Naive thymus-derived CD8-positive, alpha-beta T cell (primary cell): ENCODE measurements at regions of chr3 and their contacts with region 1.

Region 1: DNA sequence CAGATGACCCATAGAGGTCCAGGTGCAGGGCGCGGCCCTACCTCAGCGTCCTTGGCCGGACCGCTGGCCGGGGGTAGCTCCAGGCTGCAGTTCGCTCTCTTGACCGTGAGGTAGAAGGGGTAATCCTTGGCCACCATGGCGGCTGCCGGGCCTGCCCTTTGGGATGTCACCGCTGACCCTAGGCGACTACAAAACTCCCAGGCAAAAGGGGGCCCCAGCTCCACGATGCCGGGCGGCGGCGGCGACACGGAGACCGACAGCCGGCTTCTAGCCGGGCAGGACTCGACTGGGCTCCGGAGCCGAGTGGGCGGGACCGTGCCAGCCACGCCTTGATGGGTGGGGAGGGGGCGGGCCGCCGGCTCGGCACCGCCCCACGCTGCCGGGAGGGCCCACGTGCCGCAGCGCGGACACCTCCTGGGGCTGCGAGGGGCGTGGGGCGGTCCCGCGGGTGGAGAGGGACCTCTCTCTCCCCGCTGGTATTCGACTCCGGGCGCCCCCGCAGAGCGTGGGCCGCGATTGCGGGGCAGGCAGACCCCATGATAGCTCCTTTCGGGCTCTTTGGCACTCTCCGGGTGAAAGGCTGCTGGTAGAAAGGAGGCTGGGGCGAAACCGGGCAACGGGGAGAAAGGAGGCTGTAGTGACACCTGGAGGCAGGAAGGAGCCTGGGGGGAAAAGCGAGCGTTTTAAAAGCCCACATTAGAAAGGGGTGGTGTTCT is at the start of gene ARHGEF3:
- DNase-seq: peak; percentile 81 to 95 (median 90)
- ATAC-seq: peak; percentile 76 to 83
- H3K4me3 Mint-ChIP-seq: peak within 1 kb of the TSS; percentile 91 to 100 (median 96)
- H3K27ac Mint-ChIP-seq: peak within 1 kb of the TSS; percentile 79 to 96 (median 92)
- H3K4me1 Mint-ChIP-seq: peaks cover 17 to 50% (median 32%) of the 10 kb centered on the region in 4 donors
- H3K27me3 Mint-ChIP-seq: no peaks in the 10 kb centered on the region
- polyA plus RNA-seq, gene ARHGEF3: 95.3 to 101 (median 96.9) TPM

Region 2: DNA sequence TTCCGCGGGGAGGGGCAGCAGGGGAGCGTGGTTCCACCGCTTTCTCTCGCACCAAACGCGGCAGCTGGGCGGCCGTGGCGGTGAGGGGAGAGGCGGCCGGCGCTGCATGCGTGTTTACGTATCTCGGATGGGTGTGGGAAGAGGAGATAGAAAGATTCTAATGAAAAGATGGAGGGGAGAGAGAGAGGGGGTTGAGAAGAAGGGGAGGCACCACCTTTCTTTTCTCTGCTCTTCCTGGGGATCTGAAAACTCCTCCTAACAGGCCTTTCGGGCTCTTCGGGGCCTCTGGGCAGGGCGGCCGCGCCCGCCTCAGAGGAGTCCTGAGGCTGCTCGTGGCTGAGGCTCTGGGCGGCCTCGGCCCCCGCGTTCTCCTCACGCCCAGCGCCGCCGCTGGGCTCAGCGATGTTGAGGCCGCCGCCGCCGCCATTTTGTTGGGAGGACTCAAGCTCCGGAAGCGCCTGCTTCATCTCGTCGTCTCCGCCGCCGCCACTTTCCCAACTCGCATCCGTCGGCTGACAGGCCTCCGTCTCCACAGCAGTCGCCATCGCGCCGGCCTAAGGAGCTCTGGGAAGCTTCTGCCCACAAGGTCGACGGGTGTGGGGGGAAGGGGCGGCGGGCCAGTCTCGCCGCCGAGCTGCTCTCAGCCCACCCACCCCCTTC is 119.2 kb before region 1 on chr3:
- POLR2A ChIA-PET with region 1: interaction called, 37 read pairs
- DNase-seq: peak; percentile 64 to 89 (median 73)
- ATAC-seq: peak; percentile 75 to 76
- H3K4me3 Mint-ChIP-seq: peak overlapping the region; percentile 87 to 98 (median 94)
- H3K27ac Mint-ChIP-seq: peak overlapping the region; percentile 87 to 99 (median 97)
- H3K4me1 Mint-ChIP-seq: peaks cover 12 to 46% (median 32%) of the 10 kb centered on the region in 4 donors
- H3K27me3 Mint-ChIP-seq: no peaks in the 10 kb centered on the region

Region 3: DNA sequence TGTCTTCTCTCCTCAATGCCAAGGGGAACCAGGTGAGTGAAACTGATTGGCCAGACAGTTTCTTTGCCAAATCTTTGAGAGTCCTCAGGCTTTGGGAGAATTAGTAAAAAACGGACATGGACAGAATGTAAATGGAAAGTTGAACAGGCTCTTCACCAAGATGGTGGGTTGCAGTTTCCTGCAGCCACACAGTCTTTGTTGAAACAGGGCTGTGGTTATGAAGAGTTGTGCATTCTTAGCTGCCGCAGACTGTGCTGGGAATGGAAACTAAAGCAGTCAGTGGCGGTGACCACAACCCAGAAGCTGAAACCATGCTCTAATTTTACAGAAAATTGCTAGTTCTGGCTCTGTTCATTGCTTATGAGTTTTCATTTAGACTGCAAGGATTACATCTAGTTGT is 76.6 kb before region 1 on chr3:
- POLR2A ChIA-PET with region 1: interaction called, 32 read pairs
- DNase-seq: peak; percentile 10 to 77 (median 60)
- ATAC-seq: peak; percentile 92 to 97
- H3K4me3 Mint-ChIP-seq: peak overlapping the region; percentile 65 to 83 (median 74)
- H3K27ac Mint-ChIP-seq: peak overlapping the region; percentile 81 to 98 (median 94)
- H3K4me1 Mint-ChIP-seq: peaks cover 23 to 73% (median 62%) of the 10 kb centered on the region in 4 donors
- H3K27me3 Mint-ChIP-seq: no peaks in the 10 kb centered on the region

Region 4: GRCh38 chr3:56758539-56758981 is 43.3 kb before region 1 on chr3:
- POLR2A ChIA-PET with region 1: interaction called, 145 read pairs
- DNase-seq: peak in 2 of 10 donors; percentile 11 to 35
- ATAC-seq: peak in 1 of 2 donors; percentile 63
- H3K4me3 Mint-ChIP-seq: peak overlapping the region; percentile 33 to 84 (median 66)
- H3K27ac Mint-ChIP-seq: peak overlapping the region; percentile 58 to 98 (median 90)
- H3K4me1 Mint-ChIP-seq: peaks cover 49 to 93% (median 85%) of the 10 kb centered on the region in 4 donors
- H3K27me3 Mint-ChIP-seq: no peaks in the 10 kb centered on the region

Region 5: GRCh38 chr3:56812754-56813650 is 11.2 kb after region 1 on chr3:
- POLR2A ChIA-PET with region 1: interaction called, 34 read pairs
- DNase-seq: no peak
- ATAC-seq: no peak
- H3K4me3 Mint-ChIP-seq: peak overlapping the region in 9 of 10 donors; percentile 24 to 73 (median 55)
- H3K27ac Mint-ChIP-seq: peak overlapping the region; percentile 38 to 95 (median 84)
- H3K4me1 Mint-ChIP-seq: peaks cover 27 to 72% (median 67%) of the 10 kb centered on the region in 4 donors
- H3K27me3 Mint-ChIP-seq: no peaks in the 10 kb centered on the region

Region 6: DNA sequence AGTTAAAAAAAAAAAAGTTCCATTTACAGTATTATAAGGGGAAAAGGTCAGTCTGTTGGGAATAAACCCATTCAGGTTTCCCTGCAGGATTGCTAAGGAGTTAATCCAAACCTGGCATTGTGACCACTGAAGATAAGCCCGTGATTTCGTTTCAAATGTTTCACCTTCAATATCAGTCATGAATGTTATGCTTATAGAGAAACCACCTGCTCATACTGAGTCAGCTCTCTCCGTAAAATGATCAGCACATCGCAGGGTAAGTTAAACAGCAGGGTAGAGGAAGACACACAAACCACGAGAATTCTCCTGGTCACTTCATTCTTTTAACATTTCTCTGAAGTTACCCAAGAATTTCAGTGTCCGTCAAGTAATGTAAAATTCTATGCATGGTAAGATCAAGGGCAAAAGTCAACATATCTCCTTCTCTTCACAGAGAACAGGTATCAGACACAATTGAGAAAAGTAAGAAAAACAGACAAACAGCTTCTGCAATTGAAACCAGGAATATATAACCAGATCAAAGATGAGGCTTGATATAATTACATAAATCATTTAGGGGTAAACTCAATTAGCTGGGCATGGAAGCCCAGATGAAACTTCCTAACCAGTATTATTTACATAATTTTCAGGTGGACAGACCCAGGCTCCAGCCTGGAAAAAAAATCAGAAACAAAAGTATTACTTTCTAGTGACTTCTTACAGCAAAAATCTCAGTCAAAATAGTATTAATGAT is 67.5 kb after region 1 on chr3:
- POLR2A ChIA-PET with region 1: no interaction called
- DNase-seq: no peak
- ATAC-seq: no peak
- H3K4me3 Mint-ChIP-seq: peak overlapping the region in 7 of 10 donors; percentile 33 to 72 (median 48)
- H3K27ac Mint-ChIP-seq: peak overlapping the region in 9 of 10 donors; percentile 10 to 75 (median 44)
- H3K4me1 Mint-ChIP-seq: peaks cover 22 to 55% (median 45%) of the 10 kb centered on the region in 4 donors
- H3K27me3 Mint-ChIP-seq: no peaks in the 10 kb centered on the region

Region 7: DNA sequence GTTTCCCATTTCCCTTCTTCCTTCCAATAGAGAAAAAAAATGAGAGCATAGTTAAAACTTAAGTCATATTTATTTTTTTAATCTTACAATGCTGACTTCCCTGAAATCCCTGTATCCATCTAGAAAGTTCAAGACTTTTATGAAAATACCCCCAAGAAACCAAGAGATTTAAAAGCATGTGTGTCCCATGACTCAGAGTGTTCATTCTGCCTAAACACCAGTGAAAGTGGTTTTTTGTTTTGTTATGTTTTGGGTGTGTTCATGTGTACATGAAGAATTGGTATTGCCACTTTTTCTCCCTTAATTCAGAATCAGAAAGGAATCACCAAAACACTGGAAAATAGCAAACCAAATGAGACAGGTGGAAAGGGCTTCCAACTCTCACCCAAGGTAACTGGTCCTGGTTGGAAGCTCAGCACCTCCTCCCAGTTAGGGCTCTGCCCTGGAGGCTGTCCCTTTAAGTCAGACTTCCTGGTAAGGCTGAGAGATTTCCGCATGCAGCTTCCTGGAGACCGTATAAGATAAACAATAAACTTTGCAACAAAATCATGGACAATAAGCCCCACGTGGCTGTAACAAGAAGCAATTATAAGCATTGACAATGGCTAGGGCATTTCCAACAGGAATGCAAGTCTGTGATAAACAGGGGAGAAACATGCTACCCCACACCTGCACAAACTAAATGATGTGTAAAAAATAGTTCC is 121.9 kb after region 1 on chr3:
- POLR2A ChIA-PET with region 1: interaction called, 69 read pairs
- DNase-seq: peak; percentile 16 to 83 (median 59)
- ATAC-seq: peak; percentile 77 to 89
- H3K4me3 Mint-ChIP-seq: peak overlapping the region; percentile 53 to 84 (median 70)
- H3K27ac Mint-ChIP-seq: peak overlapping the region; percentile 90 to 100 (median 98)
- H3K4me1 Mint-ChIP-seq: peaks cover 38 to 83% (median 75%) of the 10 kb centered on the region in 4 donors
- H3K27me3 Mint-ChIP-seq: no peaks in the 10 kb centered on the region